ENCODE measurements at regions of chr7 and their contacts with region 1.

Region 1: GRCh38 chr7:17304926-17305325 is 6.5 kb downstream of the AHR start:
- DNase-seq: peak; percentile 71
- H3K4me3 Mint-ChIP-seq: no peak overlapping the region
- H3K27ac Mint-ChIP-seq: no peak overlapping the region
- H3K4me1 Mint-ChIP-seq: no peaks in the 10 kb centered on the region
- H3K27me3 Mint-ChIP-seq: no peaks in the 10 kb centered on the region
- CTCF ChIP-seq: no peak

Region 2: GRCh38 chr7:17325364-17325763 is 20.4 kb after region 1 on chr7:
- CTCF ChIA-PET with region 1: interaction called, 3 read pairs
- intact Hi-C with region 1: loop called (anchors 2 kb)
- DNase-seq: peak; percentile 48
- H3K4me3 Mint-ChIP-seq: peak overlapping the region; percentile 35
- H3K27ac Mint-ChIP-seq: peak overlapping the region; percentile 96
- H3K4me1 Mint-ChIP-seq: peaks cover 65% of the 10 kb centered on the region
- H3K27me3 Mint-ChIP-seq: no peaks in the 10 kb centered on the region
- CTCF ChIP-seq: no peak

Measured in Calu3 (cell line).